Common myeloid progenitor, CD34-positive (primary cell): ENCODE measurements at regions of chr11 and their contacts with region 1.

Region 1: DNA sequence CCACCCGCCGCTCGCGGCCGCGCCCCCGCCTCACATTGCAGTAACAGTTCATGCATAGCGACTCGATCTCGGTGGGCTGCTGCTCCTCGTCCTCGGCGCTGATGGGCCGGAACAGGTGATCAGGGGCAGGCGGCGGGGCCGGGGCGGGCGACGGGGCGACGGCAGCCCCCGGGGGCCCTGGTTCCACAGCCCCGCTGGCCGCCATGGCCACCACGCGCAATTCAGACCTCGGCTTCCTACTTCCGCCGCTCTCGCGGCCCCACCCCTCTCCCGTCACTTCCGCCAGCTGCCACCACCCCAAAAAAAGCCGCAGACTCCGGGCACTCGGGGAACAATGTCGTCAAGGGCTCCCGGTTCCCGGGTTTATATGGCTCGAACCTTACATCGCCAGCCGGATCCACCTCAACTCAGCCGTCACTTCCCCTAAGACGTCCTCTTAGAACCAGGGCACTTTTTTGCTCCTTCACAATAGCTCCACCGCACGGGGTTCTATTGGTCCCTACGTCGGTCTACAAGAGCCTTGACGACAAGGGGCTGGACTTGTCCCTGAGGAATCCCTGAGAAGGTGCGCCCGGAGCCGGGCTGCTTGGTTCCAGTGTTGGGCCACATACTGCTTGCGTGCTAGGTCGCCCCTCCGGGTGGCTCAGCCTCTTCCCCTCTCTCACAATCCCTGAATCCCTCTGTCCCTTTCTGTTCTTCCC is at the start of gene ZPR1:
- DNase-seq: peak; percentile 75 to 83 (median 81)
- H3K4me3 ChIP-seq: peak within 1 kb of the TSS; percentile 76 to 93 (median 86)
- H3K27ac ChIP-seq: peak within 1 kb of the TSS; percentile 77
- H3K4me1 ChIP-seq: peaks cover 0 to 27% (median 21%) of the 10 kb centered on the region in 4 experiments
- H3K27me3 ChIP-seq: peaks cover 0 to 2% (median 0%) of the 10 kb centered on the region in 5 experiments

Region 2: DNA sequence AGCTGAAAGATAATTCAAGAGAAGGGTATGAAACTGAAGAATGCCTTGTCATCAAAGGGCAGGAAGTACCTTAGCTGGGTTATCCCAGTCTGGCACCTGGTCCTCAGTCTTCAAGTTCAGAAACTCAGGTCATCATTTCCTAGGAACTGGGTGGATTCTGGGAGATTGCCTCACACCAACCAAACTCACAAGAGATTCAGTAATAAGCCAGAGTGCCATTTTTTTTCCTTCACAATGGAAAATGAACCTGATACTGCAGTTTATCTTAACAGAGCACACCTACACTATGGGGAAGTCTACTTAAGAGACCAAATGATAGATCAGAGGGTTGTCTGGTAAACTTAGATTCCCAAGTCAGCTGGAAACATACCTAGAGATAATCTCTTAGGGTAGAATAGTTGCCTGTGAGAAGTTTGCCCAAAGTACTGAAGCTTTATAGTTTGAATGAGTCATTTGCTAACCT is 11.4 kb before region 1 on chr11:
- CTCF ChIA-PET with region 1: interaction called, 13 read pairs
- POLR2A ChIA-PET with region 1: interaction called, 6 read pairs
- DNase-seq: no peak
- H3K4me3 ChIP-seq: no peak overlapping the region
- H3K27ac ChIP-seq: no peak overlapping the region
- H3K4me1 ChIP-seq: peaks cover 11 to 24% (median 19%) of the 10 kb centered on the region in 4 experiments
- H3K27me3 ChIP-seq: no peaks in the 10 kb centered on the region

Region 3: DNA sequence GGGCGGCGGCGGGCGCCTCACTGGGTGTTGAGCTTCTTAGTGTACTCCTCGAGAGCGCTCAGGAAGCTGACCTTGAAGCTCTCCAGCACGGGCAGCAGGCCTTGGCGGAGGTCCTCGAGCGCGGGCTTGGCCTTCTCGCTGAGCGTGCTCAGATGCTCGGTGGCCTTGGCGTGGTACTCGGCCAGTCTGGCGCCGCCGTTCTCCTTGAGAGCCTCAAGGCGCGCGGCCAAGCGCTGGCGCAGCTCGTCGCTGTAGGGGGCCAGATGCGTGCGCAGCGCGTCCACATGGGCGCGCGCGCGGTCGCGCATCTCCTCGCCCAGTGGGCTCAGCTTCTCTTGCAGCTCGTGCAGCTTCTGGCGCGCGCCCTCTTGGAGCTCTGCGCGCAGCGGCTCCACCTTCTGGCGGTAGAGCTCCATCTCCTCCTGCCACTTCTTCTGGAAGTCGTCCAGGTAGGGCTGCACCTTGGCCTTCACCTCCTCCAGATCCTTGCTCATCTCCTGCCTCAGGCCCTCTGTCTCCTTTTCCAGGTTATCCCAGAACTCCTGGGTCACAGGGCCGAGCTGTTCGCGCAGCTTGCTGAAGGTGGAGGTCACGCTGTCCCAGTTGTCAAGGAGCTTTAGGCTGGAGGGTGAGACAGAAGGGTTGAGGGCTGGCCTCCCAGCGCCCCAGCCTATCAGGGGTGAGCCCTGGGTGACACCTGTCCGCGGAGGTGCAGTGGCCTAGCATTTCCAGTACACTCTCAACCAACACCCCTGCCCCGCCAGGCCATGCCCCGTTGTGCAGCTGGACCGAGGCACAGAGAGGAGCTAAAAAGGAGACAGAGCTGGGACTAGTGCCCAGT is 48.1 kb after region 1 on chr11:
- CTCF ChIA-PET with region 1: interaction called, 109 read pairs
- POLR2A ChIA-PET with region 1: interaction called, 3 read pairs
- DNase-seq: peak; percentile 92 to 95 (median 94)
- H3K4me3 ChIP-seq: peak overlapping the region; percentile 46 to 79 (median 59)
- H3K27ac ChIP-seq: peak overlapping the region in 1 of 2 experiments; percentile 67
- H3K4me1 ChIP-seq: peaks cover 0 to 30% (median 22%) of the 10 kb centered on the region in 4 experiments
- H3K27me3 ChIP-seq: no peaks in the 10 kb centered on the region

Region 4: GRCh38 chr11:116871248-116871647 is 83.3 kb after region 1 on chr11:
- CTCF ChIA-PET with region 1: interaction called, 14 read pairs
- POLR2A ChIA-PET with region 1: no interaction called
- DNase-seq: peak in 2 of 3 donors; percentile 42 to 58
- H3K4me3 ChIP-seq: no peak overlapping the region
- H3K27ac ChIP-seq: peak overlapping the region; percentile 53 to 61
- H3K4me1 ChIP-seq: peaks cover 14 to 42% (median 34%) of the 10 kb centered on the region in 4 experiments
- H3K27me3 ChIP-seq: no peaks in the 10 kb centered on the region

Region 5: DNA sequence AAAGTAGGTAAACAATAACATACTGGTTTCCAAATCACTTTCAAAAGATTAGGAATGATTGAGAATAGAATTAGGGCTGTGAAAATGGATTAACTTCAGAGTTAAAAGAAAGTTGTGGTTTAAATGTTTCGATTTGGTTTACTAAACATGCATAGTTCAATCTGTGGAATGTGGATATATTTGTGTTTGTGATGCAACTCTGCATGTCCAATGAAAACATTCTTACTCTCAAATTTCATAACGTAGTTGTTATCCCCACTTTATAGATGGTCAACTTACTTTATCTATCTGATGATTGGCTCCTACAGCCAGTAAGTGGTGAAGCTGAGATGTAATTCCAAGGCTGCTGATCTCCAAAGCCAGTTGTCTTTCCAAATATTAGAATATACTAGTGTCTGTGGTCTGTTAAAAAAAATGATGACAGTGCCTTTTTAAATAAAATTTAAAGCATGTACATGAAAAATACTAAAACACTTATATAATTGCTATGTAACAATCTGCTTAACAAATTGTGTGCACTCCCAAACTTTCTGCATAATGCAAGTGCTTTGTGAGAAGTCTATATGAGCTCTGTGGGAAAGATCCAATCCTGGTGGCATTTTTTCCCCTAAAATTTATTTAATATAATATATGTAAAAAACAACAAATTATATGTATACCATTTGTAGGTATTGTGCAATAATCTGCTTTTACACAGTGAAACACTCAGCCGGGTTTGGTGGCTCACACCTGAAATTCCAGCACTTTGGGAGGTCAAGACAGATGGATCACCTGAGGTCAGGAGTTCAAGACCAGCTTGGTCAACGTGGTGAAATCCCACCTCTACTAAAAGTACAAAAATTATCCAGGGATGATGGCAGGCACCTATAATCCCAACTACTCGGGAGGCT is 320.0 kb after region 1 on chr11:
- CTCF ChIA-PET with region 1: interaction called, 134 read pairs
- POLR2A ChIA-PET with region 1: interaction called, 6 read pairs
- DNase-seq: no peak
- H3K4me3 ChIP-seq: no peak overlapping the region
- H3K27ac ChIP-seq: no peak overlapping the region
- H3K4me1 ChIP-seq: no peaks in the 10 kb centered on the region
- H3K27me3 ChIP-seq: no peaks in the 10 kb centered on the region